Cardiac septum (tissue), 1 donor: ENCODE measurements at regions of chr9 and their contacts with region 1.

Region 1: GRCh38 chr9:112717661-112718341 is at the start of gene INIP:
- DNase-seq: peak; percentile 99
- total RNA-seq, gene INIP: 15.1 TPM

Region 2: DNA sequence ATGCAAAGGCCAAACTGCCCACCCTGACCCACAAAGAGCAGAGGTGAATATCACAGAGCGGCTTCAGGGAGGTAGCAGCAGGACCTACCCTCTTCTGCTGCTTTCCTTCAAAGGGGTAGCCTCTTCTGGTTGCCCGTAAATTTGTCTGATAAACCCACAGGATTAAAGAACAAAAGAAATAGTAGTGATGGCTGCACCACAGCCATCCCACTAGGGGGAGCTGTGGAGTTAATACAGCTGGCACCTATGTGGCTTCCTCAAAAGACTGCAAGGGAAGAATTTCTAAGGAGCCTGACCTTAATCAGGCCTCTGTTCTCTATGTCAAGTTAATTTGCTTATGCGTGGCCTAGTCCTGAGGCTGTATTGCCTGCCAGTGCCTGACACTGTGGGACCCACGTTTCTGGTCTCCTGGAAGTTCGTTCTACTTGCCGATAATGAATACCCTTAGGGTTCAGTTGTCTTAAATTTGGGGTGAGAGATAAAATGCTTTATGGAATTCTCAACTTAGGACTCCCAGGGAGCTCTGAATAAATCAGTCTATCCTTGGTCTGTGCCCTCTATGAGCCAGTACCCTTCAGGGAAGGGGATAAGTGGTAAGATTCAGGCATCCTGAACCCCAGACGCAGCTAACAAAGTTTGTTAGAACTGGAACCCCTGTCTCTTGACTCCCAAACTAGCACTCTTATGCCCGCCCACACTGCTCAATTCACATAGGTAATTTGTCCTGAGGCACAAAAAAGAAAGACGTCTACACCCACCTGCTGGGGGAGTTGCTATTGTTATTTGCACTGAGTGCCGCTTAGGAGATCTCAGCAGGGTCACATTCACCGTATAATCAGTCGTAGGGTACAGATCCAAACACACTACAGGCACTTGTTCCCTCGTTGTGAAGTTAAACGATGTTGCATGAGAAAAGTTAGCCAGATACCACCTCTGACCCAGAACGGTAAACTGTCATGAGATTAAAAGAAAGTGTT is 619.8 kb before region 1 on chr9:
- intact Hi-C with region 1: loop called (anchors 10 kb)
- DNase-seq: no peak

Region 3: GRCh38 chr9:112443200-112443599 is 274.6 kb before region 1 on chr9:
- intact Hi-C with region 1: loop called (anchors 10 kb)
- DNase-seq: no peak

Region 4: DNA sequence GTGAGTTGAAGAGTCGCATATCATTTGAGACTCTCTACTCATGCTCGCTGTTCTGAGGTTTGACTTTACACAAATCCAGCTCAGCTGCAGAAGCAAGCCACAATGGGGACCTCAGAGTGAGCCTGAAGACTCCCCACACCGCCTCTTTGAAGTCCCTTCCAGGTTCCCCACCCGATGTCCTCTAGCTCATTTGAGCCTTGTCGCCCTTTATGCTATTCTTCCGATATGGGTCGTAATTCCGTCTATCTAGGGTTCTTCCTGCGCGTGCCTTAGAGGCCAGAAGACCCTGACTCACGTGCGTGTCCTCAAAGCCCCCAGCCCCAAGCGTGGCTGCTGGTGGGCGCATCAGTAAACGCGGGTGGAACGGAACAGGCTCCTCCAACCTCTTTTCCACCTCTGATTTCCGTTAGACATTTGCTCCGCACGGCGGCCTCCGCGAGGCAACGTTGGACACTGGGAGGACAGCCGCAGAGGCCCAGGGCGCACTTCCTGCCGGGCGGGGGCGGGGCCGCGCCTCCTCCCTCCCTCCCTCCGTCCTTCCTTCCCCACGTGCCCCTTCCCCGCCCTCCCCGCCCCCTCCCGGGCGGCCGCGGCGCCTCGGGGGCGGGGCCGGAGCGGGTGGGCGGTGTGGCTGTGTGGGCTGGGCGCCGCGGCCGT is 32.4 kb after region 1 on chr9 and contains the start of gene SNX30:
- intact Hi-C with region 1: loop called (anchors 5 kb)
- DNase-seq: peak; percentile 95
- total RNA-seq, gene SNX30: 4.5 TPM

Region 5: GRCh38 chr9:112793213-112793810 is 75.5 kb after region 1 on chr9:
- intact Hi-C with region 1: no loop called
- DNase-seq: peak; percentile 83

Region 6: DNA sequence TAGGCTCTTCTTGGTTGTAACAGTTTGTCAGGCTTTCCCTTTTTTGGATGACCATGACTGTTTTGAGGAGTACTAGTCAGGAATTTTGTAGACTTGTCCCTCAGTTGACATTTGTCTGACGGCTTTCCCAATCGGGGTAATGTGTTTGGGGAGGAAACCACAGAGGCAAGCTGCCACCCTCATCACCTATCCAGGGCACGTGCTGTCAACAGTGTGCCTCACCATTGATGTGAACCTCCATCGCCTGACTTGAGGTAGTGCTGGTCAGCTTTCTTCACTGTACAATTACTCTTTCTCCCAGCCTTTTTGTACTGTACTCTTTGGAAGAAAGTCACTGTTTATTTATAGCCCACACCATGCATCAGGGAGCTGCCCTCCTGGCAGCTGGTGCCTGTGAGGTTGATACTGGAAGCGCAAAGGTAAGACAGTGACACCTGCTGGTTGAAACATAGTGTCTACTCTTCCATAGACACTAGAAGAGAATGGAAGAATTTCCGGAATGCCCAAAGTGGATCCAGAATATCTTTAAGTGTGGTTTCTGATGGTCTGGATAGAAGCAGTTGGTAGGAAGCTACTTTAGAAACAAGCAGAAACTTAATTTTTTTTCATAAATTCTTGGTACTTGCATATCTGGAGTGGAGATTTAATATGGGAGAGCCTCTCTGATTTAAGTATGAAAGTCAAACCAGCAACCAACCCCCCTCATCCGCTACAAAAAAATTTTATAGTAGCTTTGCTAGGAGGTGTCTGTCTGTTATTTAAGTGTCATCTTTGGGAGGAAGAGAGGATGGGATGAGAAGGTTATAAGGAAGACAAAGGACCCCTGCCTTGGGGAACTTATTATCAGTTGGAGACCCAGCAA is 102.1 kb after region 1 on chr9:
- intact Hi-C with region 1: loop called (anchors 2 kb)
- DNase-seq: no peak